ENCODE measurements at regions of chrX and their contacts with region 1.

Region 1: DNA sequence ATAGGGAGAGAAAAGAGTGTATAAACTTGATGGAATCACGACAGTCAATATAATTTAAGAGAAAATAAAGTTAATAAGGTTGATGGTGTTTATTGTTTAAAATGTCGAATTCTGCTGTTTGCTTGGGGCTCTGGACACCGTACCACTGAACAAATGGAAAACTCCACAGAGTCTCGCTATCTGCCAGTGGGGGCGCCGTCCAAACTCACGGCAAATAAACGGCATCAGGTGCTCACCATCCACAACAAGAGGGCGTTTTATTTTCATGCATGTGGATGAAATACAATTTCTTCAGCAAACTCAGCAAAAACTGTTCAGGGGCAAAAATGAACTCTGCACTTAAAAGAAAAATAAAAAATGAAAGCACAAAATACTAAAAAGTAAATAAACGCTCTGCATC is 46.6 kb upstream of the FAM47C start:
- DNase-seq: no peak

Region 2: GRCh38 chrX:38126179-38126578 is 1164.6 kb after region 1 on chrX:
- intact Hi-C with region 1: loop called in 1 of 2 experiments (anchors 5 kb)
- DNase-seq: no peak

Region 3: DNA sequence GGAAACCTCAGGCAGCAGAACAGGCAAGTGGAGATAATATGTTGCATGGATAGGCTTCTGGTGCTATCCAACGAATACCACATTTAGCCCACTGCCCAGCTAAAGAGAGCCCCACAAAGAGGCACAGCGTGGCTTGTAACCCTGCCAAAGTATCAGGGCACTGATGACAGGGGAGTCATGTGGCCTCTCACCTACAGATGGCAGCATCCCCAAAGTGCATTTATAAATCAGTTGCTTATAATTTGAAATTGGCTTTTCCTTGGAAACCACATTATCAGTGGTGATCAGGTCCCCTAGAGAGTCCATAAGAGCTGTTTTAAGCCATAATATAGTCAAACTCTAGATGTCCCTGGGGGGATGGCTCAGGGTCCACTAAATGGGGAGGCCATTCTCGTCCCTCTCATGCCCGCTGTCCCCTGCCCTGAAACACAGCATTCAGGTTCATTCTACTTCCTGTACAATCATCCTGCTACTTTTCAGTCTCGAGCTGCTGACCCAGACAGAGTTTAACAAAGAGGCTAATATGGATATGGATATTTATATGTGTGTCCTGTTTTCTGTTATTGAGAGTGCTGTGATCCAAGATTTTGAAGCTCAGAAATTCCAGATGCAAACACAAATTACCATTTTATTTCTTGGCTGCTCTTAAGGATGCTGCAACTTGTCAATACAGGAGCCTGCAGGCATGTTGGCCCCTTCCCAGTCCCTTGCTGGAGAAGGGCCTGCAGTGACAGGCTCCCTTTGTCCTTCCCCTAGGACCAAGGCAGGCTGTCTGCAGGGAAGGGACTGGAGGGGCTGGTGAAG is 1230.6 kb after region 1 on chrX:
- intact Hi-C with region 1: no loop called
- DNase-seq: no peak